ENCODE measurements at regions of chr6 and their contacts with region 1.

Region 1: GRCh38 chr6:21885532-21886114 is 292.1 kb downstream of the SOX4 start:
- DNase-seq: peak; percentile 16 to 27
- ATAC-seq: peak; percentile 60 to 91 (median 76)
- H3K4me3 ChIP-seq: peak overlapping the region in 1 of 10 donors; percentile 1
- H3K27ac ChIP-seq: peak overlapping the region in 5 of 10 donors; percentile 52 to 58 (median 53)
- H3K4me1 ChIP-seq: peaks cover 0 to 36% (median 20%) of the 10 kb centered on the region in 9 donors
- H3K27me3 ChIP-seq: no peaks in the 10 kb centered on the region
- CTCF ChIP-seq: no peak

Region 2: DNA sequence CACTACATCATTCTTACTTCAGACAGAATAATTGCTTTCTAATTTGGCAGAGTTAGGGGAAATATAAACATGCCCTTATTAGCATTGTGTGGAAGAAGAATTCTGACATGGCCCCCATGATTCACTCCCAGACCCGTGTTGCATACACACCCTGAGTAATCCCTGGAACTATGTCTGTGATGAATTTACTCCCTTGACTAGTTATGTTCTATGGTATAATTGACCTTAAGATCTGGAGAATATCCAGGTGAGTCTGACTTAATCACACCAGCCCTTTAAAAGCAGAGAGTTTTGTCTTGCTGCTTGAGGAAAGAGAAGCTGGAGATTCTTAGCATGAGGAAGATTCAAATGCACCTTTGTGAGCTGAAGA is 29.2 kb before region 1 on chr6:
- intact Hi-C with region 1: loop called in 1 of 10 experiments (anchors 2 kb)
- DNase-seq: no peak
- ATAC-seq: no peak
- H3K4me3 ChIP-seq: peak overlapping the region in 1 of 10 donors; percentile 22
- H3K27ac ChIP-seq: peak overlapping the region in 1 of 10 donors; percentile 76
- H3K4me1 ChIP-seq: peaks cover 0 to 12% (median 0%) of the 10 kb centered on the region in 9 donors
- H3K27me3 ChIP-seq: no peaks in the 10 kb centered on the region
- CTCF ChIP-seq: no peak

Region 3: DNA sequence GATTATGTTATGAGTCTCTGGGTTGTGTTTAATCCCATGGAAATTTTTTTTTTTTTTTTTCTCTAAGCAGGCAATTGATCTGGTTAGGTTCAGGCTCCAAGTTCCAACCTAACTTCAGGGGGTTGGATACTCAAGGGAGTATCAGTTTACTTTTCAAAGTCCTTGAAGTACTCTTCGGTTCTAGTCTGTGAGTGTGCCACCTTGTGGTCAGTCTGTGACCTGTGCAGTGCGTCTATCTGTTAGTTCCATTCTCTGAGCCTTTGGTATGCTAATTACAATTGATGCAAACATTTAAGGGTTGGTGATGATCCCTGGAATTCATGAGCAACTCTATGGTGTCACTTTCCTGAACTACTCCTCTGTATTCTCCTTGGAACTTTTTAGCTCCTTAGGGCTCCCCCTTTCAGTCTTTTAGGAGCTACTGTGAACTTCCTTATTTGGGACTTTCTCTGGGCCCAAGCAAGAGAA is 50.0 kb after region 1 on chr6:
- intact Hi-C with region 1: no loop called
- DNase-seq: peak in 1 of 2 donors; percentile 15
- ATAC-seq: peak in 3 of 8 donors; percentile 31 to 41 (median 31)
- H3K4me3 ChIP-seq: no peak overlapping the region
- H3K27ac ChIP-seq: no peak overlapping the region
- H3K4me1 ChIP-seq: peaks cover 0 to 5% (median 0%) of the 10 kb centered on the region in 9 donors
- H3K27me3 ChIP-seq: no peaks in the 10 kb centered on the region
- CTCF ChIP-seq: peak; percentile 15 to 70 (median 58)

Measured in heart right ventricle (tissue), 16 donors.